ENCODE measurements at regions of chr5 and their contacts with region 1.

Region 1: GRCh38 chr5:173567574-173567973 is 48.9 kb downstream of the BOD1 start:
- DNase-seq: no peak
- ATAC-seq: no peak
- H3K4me3 ChIP-seq: no peak overlapping the region
- H3K27ac ChIP-seq: no peak overlapping the region
- H3K4me1 ChIP-seq: peaks cover under 1 to 3% of the 10 kb centered on the region in 2 donors
- H3K27me3 ChIP-seq: no peaks in the 10 kb centered on the region
- CTCF ChIP-seq: no peak
- POLR2A ChIP-seq: no peak

Region 2: GRCh38 chr5:173435447-173435846 is 132.1 kb before region 1 on chr5:
- in situ Hi-C with region 1: loop called in 1 of 4 experiments (anchors 10 kb)
- intact Hi-C with region 1: no loop called
- DNase-seq: peak in 1 of 2 donors; percentile 32
- ATAC-seq: peak; percentile 31 to 39
- H3K4me3 ChIP-seq: no peak overlapping the region
- H3K27ac ChIP-seq: peak overlapping the region in 2 of 4 donors; percentile 38 to 40
- H3K4me1 ChIP-seq: no peaks in the 10 kb centered on the region
- H3K27me3 ChIP-seq: no peaks in the 10 kb centered on the region
- CTCF ChIP-seq: no peak
- POLR2A ChIP-seq: no peak

Measured in gastrocnemius medialis (tissue), 4 donors.